Cardiac septum (tissue), 1 donor: ENCODE measurements at regions of chr17 and their contacts with region 1.

Region 1: DNA sequence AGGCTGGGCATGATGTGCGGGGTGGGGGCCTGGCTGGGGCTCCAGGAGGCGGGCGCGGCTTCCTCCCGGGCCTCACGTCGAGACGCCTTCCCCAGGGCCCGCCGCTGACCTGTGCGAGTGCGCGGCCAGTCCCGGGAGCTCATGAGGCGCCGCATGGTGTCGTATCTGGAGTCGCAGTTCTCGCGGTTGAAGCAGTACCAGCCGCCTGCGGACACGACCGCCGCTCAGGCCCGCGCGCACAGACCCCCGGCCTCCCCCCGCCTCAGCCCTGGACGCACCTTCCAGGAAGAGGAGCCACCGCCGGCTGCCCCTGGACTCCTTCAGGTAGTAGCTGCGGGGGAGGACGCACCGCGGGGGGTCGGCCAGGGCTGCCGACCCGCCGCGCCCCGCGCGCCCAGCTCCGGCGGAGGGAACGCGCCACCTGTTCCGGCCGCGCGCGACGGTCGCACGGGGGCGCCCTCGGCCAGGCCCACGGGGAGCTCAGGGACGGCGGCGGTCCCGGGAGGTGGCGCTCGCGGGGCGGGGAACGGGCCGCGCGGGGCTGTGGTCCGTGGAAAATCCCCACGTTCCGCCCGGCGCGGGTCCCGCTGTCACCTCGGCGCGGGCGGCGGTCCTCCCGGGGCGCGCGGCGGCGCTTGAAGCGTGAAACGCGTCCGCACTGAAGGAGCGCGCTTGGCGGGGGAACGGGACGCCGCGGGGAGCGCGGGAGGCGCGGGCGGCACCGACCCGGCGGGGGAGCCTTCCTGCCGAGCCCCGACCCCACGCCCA is 1.4 kb downstream of the NOTUM start:
- DNase-seq: peak; percentile 89

Region 2: GRCh38 chr17:82022981-82023374 is 63.4 kb after region 1 on chr17 and contains the start of gene LRRC45:
- intact Hi-C with region 1: loop called (anchors 1 kb)
- DNase-seq: peak; percentile 100
- total RNA-seq, gene LRRC45: 3.3 TPM

Region 3: GRCh38 chr17:82077617-82078358 is 118.2 kb after region 1 on chr17:
- intact Hi-C with region 1: no loop called
- DNase-seq: no peak

Region 4: DNA sequence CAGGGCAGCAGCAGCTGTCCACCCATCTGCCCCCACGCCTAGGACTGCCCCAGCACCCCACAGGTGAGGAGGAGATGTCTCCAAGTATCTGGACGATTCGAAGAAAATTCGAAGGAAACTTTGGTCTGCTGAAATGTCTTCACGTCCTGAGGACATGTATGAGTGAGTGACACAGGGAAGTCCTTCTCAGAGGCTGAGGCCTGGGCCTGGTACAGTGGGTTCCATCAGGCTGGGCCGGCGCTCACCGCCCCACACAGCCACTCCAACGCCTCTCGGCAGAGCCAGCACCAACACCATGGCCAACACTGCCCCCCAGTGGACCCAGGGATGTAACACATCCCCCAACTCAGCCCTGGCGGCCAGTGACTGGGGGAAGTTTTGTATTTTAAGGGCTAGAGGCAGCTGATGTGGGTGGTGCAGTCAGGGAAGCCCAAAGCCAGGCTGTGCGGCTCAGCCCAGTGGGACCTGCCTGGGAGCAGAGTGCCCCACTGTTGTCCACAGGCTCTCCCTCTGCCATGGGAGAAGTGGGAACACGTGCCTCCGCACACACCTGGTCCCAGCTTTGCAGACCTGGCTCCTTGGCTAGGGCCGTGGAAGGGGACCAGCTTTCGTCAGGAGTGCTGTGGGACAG is 194.3 kb after region 1 on chr17:
- intact Hi-C with region 1: loop called (anchors 5 kb)
- DNase-seq: peak; percentile 91